Calu3 (cell line): ENCODE measurements at regions of chr6 and their contacts with region 1.

Region 1: DNA sequence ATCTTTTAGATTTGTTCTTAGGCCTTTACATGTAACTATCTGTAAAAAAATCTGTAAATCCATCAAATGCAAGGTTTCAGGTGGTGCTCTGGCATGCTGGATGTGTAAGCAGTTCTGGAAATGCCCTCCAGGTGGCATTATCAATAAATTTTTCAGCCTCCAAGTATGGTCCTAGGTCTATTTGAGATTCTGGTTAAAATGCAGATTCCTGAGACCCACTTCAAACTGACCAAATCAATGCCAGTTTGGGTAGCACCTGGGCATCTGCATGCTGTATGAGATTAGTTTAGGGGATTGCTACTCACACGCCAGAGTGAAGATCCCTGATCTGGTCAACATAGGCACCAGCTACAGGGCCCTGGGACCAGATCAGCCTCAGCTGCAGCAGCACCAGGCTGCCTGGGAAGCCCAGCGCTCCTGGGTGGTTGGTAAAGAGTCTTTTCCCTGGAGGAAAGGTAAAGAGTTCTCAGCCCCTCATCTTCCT is 507.3 kb upstream of the CITED2 start:
- DNase-seq: peak; percentile 45
- H3K4me3 Mint-ChIP-seq: no peak overlapping the region
- H3K27ac Mint-ChIP-seq: no peak overlapping the region
- H3K4me1 Mint-ChIP-seq: peaks cover 9% of the 10 kb centered on the region
- H3K27me3 Mint-ChIP-seq: no peaks in the 10 kb centered on the region
- CTCF ChIP-seq: peak; percentile 51

Region 2: DNA sequence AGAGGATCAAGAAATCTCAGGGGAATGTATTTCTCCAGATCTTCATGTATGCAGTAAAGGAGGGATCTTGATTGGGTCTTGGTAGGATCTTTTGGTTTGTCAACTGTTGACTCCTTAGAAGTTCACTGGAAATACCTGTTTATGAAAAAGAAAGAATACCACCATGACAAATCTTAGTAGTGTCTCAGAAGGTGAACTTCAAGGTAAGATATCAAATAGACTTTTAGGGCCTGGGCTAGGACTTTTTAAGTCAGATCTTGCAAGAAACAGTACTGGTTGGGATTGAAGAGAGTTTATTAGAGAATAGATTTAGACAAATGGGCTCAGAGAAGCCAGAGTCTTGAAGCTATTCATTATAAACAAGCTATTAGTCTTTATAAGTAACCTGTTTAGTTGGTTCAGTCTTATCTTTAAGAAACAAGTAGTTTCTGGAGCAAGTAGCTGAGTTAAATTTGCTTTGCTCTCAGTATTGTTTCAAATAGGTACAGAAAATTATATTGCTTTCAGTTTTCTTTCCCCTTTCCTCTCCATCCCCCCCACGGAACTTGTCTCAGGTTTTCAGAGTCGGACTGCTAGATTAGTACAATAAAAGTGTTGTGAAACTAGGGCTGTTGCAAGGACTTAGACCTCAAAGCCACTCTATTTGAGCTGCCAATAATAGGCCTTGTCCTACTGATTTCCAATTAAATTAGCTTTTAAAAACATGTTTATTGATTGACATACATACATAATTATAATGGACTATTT is 21.8 kb after region 1 on chr6:
- CTCF ChIA-PET with region 1: no interaction called
- intact Hi-C with region 1: no loop called
- DNase-seq: no peak
- H3K4me3 Mint-ChIP-seq: no peak overlapping the region
- H3K27ac Mint-ChIP-seq: no peak overlapping the region
- H3K4me1 Mint-ChIP-seq: no peaks in the 10 kb centered on the region
- H3K27me3 Mint-ChIP-seq: no peaks in the 10 kb centered on the region
- CTCF ChIP-seq: no peak

Region 3: DNA sequence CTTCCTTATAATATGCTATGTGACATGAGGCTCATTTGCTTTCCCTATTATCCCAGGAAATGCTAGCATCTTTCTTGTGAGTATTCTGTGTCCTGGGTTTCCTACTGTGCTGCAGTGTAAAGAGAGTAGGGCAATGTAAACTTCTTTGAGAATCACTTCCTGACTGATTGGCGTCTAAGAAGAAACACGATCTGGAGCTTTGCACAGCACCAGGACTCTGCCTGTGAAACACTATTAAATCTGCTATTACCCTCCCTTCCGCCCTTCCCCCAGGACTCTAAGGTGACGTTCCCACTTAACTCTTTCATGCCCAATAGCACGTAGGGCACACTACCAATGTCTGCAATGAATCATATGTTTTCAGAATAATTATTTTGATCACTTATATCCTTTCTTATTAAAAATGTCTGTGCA is 100.0 kb after region 1 on chr6:
- CTCF ChIA-PET with region 1: no interaction called
- intact Hi-C with region 1: loop called (anchors 5 kb)
- DNase-seq: peak; percentile 45
- H3K4me3 Mint-ChIP-seq: no peak overlapping the region
- H3K27ac Mint-ChIP-seq: no peak overlapping the region
- H3K4me1 Mint-ChIP-seq: peaks cover 66% of the 10 kb centered on the region
- H3K27me3 Mint-ChIP-seq: no peaks in the 10 kb centered on the region
- CTCF ChIP-seq: no peak

Region 4: DNA sequence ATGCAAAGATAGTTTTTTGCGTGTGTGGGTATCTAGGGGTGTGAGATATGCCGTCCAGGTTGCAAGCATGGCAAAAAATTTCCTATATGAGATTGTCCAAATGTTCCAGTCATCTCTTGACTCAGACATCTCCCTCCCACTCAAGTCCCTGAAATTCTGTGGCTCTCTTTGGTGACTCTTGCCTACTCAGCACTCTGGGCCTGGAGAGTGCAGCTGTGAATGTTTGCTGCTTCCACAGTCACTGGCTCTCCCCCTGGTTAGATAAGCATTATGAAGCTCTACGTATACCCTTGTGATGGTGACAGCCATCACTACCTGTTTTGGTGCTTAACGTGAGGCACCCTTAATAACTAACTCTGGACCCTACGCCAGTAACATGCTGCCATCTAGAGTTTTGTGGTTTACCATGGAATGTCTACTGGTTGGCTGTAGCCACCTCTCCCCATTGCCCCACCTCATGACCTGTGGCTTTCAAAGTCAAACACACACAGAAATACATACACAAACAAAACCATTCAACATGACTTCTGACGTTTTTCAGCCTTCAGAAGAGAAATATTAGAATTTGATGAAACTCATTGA is 114.6 kb after region 1 on chr6:
- CTCF ChIA-PET with region 1: no interaction called
- intact Hi-C with region 1: loop called (anchors 1 kb)
- DNase-seq: peak; percentile 43
- H3K4me3 Mint-ChIP-seq: no peak overlapping the region
- H3K27ac Mint-ChIP-seq: no peak overlapping the region
- H3K4me1 Mint-ChIP-seq: peaks cover 10% of the 10 kb centered on the region
- H3K27me3 Mint-ChIP-seq: no peaks in the 10 kb centered on the region
- CTCF ChIP-seq: no peak

Region 5: GRCh38 chr6:140441256-140441655 is 559.5 kb after region 1 on chr6:
- CTCF ChIA-PET with region 1: no interaction called
- intact Hi-C with region 1: loop called (anchors 10 kb)
- DNase-seq: peak; percentile 16
- H3K4me3 Mint-ChIP-seq: no peak overlapping the region
- H3K27ac Mint-ChIP-seq: no peak overlapping the region
- H3K4me1 Mint-ChIP-seq: no peaks in the 10 kb centered on the region
- H3K27me3 Mint-ChIP-seq: no peaks in the 10 kb centered on the region
- CTCF ChIP-seq: no peak

Region 6: GRCh38 chr6:140921366-140922226 is 1039.8 kb after region 1 on chr6:
- CTCF ChIA-PET with region 1: no interaction called
- intact Hi-C with region 1: loop called (anchors 10 kb)
- DNase-seq: peak; percentile 37
- H3K4me3 Mint-ChIP-seq: no peak overlapping the region
- H3K27ac Mint-ChIP-seq: no peak overlapping the region
- H3K4me1 Mint-ChIP-seq: peaks cover 15% of the 10 kb centered on the region
- H3K27me3 Mint-ChIP-seq: no peaks in the 10 kb centered on the region
- CTCF ChIP-seq: no peak